ENCODE measurements at regions of chr7 and their contacts with region 1.

Region 1: GRCh38 chr7:26143298-26144048 is 8.5 kb upstream of the NFE2L3 start:
- DNase-seq: peak in 2 of 7 donors; percentile 26 to 35
- H3K4me3 ChIP-seq: no peak overlapping the region
- H3K27ac ChIP-seq: no peak overlapping the region
- H3K4me1 ChIP-seq: no peaks in the 10 kb centered on the region
- H3K27me3 ChIP-seq: no peaks in the 10 kb centered on the region
- CTCF ChIP-seq: no peak
- POLR2A ChIP-seq: no peak

Region 2: GRCh38 chr7:26097852-26098668 is 45.4 kb before region 1 on chr7:
- intact Hi-C with region 1: loop called in 1 of 2 experiments (anchors 5 kb)
- DNase-seq: peak in 1 of 7 donors; percentile 17
- H3K4me3 ChIP-seq: no peak overlapping the region
- H3K27ac ChIP-seq: no peak overlapping the region
- H3K4me1 ChIP-seq: no peaks in the 10 kb centered on the region
- H3K27me3 ChIP-seq: no peaks in the 10 kb centered on the region
- CTCF ChIP-seq: no peak
- POLR2A ChIP-seq: no peak

Region 3: GRCh38 chr7:26112203-26112740 is 31.2 kb before region 1 on chr7:
- intact Hi-C with region 1: no loop called
- DNase-seq: peak in 1 of 7 donors; percentile 9
- H3K4me3 ChIP-seq: no peak overlapping the region
- H3K27ac ChIP-seq: no peak overlapping the region
- H3K4me1 ChIP-seq: no peaks in the 10 kb centered on the region
- H3K27me3 ChIP-seq: peaks cover 3% of the 10 kb centered on the region
- CTCF ChIP-seq: no peak
- POLR2A ChIP-seq: no peak

Region 4: GRCh38 chr7:26388256-26388655 is 244.8 kb after region 1 on chr7:
- intact Hi-C with region 1: no loop called
- DNase-seq: no peak
- H3K4me3 ChIP-seq: no peak overlapping the region
- H3K27ac ChIP-seq: no peak overlapping the region
- H3K4me1 ChIP-seq: no peaks in the 10 kb centered on the region
- H3K27me3 ChIP-seq: no peaks in the 10 kb centered on the region
- CTCF ChIP-seq: no peak
- POLR2A ChIP-seq: no peak

Measured in adrenal gland (tissue), 19 donors.